Left colon (tissue), 2 donors: ENCODE measurements at regions of chr3 and their contacts with region 1.

Region 1: DNA sequence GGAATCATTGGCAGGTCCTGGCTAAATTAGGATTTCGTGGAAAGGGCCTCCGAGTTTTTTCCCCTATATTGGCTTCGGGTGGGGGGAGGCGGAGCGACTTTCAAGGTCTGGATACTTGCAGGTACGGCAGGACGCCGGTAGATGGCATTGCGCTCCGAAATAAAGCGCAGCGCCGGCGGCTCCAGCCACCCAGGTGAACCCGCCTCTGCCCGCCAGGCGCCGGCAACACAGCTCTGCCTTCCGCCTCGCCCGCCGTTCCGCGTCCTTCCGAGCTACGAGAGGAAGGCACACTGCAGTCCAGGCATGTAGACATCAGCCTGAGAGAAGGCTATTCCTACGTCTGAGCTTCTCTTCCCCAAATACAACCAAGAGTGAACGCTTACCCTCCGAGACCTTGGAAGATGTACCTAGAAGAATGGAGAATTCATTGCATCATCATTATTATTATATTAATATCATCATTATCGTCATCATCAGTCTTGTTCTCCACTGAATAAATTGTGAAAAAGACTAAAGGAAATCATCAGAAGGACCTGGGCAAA is 514.1 kb downstream of the MECOM start:
- DNase-seq: peak; percentile 81 to 88
- ATAC-seq: peak; percentile 71

Region 2: DNA sequence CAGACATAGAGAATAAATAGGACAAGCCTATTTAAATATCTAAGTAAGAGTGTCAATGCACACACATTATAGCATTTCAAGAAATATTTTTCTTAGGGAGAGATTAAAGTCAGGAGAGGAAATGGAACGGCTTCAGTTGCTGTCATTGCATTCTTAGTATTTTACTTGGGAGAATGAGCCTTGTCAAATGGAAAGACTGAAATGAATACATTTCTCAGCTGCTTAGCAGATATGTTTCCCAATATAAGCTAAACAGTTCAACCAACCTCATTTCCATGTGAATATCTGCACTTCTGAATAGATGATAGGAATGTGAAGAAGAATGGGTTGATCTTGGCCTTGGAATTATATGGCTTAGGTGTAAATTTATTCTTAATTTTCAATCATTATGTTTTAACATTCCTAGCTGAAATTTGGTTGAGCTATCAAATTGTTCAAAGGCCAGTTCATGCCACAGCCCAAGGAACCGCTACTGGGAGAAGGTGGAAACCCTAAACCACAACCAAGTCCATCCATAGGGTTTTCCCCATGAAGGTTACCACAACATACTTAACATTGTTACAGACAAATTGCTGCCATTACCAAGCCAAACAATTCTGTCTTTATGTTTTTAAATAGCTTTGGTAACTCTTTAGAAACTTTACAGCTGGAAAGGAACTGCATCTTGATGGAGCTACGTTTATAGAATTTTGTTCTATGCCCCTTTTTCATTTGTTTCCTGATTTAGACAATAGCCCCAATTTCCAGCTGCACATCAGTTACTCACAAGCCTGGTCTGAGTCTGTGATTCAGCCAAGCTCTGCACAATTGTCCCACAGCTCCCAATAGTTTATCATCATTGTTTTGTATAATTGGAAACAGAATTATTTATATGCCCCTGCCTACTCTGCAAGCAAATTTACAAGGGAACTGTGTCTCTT is 54.5 kb after region 1 on chr3:
- intact Hi-C with region 1: loop called in 1 of 2 experiments (anchors 10 kb)
- DNase-seq: no peak
- ATAC-seq: no peak

Region 3: GRCh38 chr3:169305460-169305859 is 156.0 kb after region 1 on chr3:
- intact Hi-C with region 1: no loop called
- DNase-seq: peak; percentile 40 to 75
- ATAC-seq: peak; percentile 96

Region 4: GRCh38 chr3:169662132-169662842 is 512.9 kb after region 1 on chr3:
- intact Hi-C with region 1: loop called in 1 of 2 experiments (anchors 5 kb)
- DNase-seq: peak; percentile 71 to 84
- ATAC-seq: peak; percentile 82